AG04450 (cell line): ENCODE measurements at regions of chr9 and their contacts with region 1.

Region 1: DNA sequence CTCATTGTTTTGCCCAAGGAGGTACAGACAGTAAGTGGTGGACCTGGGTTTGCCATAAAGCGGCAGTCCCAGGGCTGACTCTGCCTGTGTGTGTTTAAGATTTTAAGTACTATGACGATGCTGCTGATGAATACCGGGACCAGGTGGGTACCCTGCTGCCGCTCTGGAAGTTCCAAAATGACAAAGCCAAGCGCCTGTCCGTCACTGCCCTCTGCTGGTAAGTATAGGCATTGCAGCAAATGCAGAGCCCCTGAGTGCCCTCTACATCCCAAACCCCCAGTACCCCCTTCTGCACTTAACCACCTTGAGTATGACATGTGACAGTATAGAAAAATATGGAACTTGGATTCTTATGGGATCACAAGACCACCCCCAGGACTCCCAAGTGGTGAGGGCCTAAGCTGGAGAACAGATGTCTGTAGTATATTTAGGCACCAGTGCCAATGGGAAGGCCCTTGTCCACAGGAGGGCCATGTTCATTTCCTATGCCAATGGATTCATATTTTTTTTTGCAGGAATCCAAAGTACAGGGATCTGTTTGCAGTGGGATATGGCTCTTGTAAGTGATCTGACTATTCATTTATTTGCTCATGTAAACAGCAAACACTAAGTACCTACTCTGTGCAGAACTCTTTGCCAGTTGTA is 22.0 kb downstream of the ENHO start:
- DNase-seq: no peak
- H3K4me3 ChIP-seq: no peak overlapping the region
- H3K27ac ChIP-seq: no peak overlapping the region
- H3K27me3 ChIP-seq: peaks cover 48% of the 10 kb centered on the region
- CTCF ChIP-seq: peak; percentile 98

Region 2: GRCh38 chr9:34114436-34114835 is 386.3 kb before region 1 on chr9:
- CTCF ChIA-PET with region 1: no interaction called
- POLR2A ChIA-PET with region 1: no interaction called
- DNase-seq: no peak
- H3K4me3 ChIP-seq: no peak overlapping the region
- H3K27ac ChIP-seq: no peak overlapping the region
- H3K27me3 ChIP-seq: no peaks in the 10 kb centered on the region
- CTCF ChIP-seq: no peak

Region 3: GRCh38 chr9:34326690-34327089 is 174.1 kb before region 1 on chr9:
- CTCF ChIA-PET with region 1: no interaction called
- POLR2A ChIA-PET with region 1: no interaction called
- DNase-seq: no peak
- H3K4me3 ChIP-seq: no peak overlapping the region
- H3K27ac ChIP-seq: no peak overlapping the region
- H3K27me3 ChIP-seq: no peaks in the 10 kb centered on the region
- CTCF ChIP-seq: no peak

Region 4: GRCh38 chr9:34430843-34431437 is 69.8 kb before region 1 on chr9:
- CTCF ChIA-PET with region 1: interaction called, 58 read pairs
- POLR2A ChIA-PET with region 1: no interaction called
- DNase-seq: peak; percentile 60
- H3K4me3 ChIP-seq: no peak overlapping the region
- H3K27ac ChIP-seq: no peak overlapping the region
- H3K27me3 ChIP-seq: no peaks in the 10 kb centered on the region
- CTCF ChIP-seq: no peak

Region 5: GRCh38 chr9:34446468-34446891 is 54.3 kb before region 1 on chr9:
- CTCF ChIA-PET with region 1: interaction called, 15 read pairs
- POLR2A ChIA-PET with region 1: no interaction called
- DNase-seq: no peak
- H3K4me3 ChIP-seq: no peak overlapping the region
- H3K27ac ChIP-seq: no peak overlapping the region
- H3K27me3 ChIP-seq: no peaks in the 10 kb centered on the region
- CTCF ChIP-seq: no peak

Region 6: DNA sequence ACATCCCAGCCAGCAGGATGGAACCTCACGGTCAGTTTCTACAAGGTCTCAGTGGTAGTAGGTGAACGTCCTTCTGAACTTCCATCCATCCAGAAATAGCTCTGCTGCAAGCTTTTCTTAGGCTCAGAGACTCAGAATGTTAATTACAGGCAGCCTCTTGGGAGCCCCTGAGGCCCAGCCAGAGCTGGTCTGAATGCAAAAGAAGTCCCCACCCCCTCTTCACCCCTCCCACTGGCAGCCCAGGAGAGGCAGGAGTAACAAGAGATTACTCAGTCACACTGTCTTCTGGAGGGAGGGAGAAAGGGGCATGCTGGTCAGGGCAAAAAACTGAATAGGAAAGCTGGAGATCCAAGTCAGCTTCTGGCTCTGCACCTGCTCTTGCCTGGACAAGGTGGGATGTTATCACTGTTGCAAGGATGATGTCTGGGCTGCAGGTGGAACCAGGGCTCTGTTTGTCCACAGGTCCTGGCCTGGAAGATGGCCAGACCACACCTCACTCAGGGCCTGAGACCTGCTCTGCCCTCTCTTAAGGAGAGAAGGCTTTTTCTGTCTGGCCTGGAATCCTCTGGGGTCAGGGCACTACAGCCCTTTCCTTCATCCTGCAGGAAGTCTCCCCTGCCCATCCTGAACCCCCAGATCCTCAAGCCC is 12.9 kb after region 1 on chr9:
- CTCF ChIA-PET with region 1: interaction called, 28 read pairs
- POLR2A ChIA-PET with region 1: no interaction called
- DNase-seq: no peak
- H3K4me3 ChIP-seq: no peak overlapping the region
- H3K27ac ChIP-seq: no peak overlapping the region
- H3K27me3 ChIP-seq: peaks cover 43% of the 10 kb centered on the region
- CTCF ChIP-seq: no peak